Kidney (tissue), 22 donors: ENCODE measurements at regions of chr6 and their contacts with region 1.

Region 1: DNA sequence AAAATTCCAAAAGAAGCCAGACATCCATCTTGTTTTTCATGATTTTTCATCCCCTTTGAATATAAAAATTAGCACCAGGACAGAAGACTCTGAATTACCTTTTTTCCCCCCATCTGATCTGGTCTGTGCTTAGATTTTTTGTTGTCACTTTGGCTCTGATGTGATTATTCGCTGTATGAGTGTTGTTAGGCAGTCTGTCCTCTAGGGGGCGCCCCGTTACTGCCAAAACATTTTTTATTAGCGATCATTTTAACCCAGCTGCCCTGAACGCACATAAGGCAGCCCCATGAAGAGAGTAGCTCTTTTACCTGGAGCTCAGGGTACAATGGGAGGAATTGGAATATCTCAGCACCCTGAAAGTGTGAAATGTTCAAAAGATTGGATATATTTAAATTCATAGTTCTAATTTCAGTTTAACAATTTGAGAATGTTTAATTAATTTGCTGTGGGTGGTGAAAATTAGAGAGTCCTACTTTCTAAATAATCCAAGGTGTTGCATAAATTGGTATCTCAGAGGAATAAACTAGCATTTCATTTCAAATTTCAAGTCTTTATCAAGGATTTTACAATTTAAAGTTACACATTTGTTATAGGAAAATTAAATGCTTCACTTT is 60.8 kb downstream of the PRPH2 start:
- DNase-seq: peak; percentile 80 to 90 (median 82)
- H3K4me3 ChIP-seq: no peak overlapping the region
- H3K27ac ChIP-seq: no peak overlapping the region
- H3K4me1 ChIP-seq: no peaks in the 10 kb centered on the region
- H3K27me3 ChIP-seq: no peaks in the 10 kb centered on the region
- CTCF ChIP-seq: peak; percentile 95

Region 2: DNA sequence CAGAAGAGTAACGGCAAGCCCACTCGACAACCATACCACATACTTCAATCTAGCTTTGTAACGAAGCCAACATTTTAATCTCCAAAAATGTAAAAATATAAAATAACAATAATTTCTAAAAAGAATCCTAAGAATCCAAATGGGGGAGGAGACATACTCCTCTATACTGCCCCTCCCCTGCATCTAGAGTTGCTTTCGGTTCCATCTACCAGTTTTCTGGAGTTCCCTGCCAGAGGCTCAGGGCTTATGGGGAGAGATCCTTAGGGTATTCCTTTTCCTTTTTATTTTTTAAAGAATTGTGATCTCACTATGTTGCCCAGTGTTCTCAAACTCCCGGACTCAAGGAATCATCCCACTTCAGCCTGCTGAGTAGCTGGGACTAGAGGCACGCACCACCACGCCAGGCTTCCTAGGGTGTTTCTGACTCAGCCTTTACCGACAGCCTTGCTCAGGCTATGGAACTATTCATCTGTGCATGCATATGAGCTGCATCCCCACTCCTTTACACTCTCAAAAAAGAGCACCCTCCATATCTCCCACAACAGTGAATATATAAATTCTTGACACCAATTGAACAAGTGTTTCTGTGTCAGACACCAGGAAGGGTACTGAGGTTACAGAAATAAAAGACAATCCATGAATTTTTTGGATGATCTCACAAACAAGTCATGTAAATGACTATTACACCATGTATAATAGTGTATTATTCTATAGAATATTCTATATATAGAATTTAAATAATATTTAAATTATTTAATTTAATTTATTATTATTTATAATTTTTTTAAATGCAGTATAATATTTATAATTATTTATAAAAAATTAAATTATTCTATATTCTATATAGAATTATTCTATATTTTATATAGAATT is 138.5 kb before region 1 on chr6:
- intact Hi-C with region 1: no loop called
- DNase-seq: no peak
- H3K4me3 ChIP-seq: no peak overlapping the region
- H3K27ac ChIP-seq: no peak overlapping the region
- H3K4me1 ChIP-seq: no peaks in the 10 kb centered on the region
- H3K27me3 ChIP-seq: no peaks in the 10 kb centered on the region
- CTCF ChIP-seq: no peak

Region 3: GRCh38 chr6:42726485-42727086 is 64.9 kb after region 1 on chr6:
- intact Hi-C with region 1: loop called (anchors 10 kb)
- DNase-seq: peak; percentile 71 to 94 (median 80)
- H3K4me3 ChIP-seq: peak overlapping the region; percentile 68 to 96 (median 80)
- H3K27ac ChIP-seq: peak overlapping the region; percentile 44 to 71
- H3K4me1 ChIP-seq: peaks cover 0 to 2% (median 0%) of the 10 kb centered on the region in 3 donors
- H3K27me3 ChIP-seq: no peaks in the 10 kb centered on the region
- CTCF ChIP-seq: peak; percentile 93

Region 4: GRCh38 chr6:42879372-42880239 is 218.0 kb after region 1 on chr6 and contains the start of gene RPL7L1:
- intact Hi-C with region 1: loop called (anchors 5 kb)
- DNase-seq: peak; percentile 90 to 96 (median 91)
- H3K4me3 ChIP-seq: peak within 1 kb of the TSS; percentile 93 to 100 (median 100)
- H3K27ac ChIP-seq: peak within 1 kb of the TSS; percentile 85 to 93
- H3K4me1 ChIP-seq: peaks cover 0 to 5% (median 4%) of the 10 kb centered on the region in 3 donors
- H3K27me3 ChIP-seq: no peaks in the 10 kb centered on the region
- CTCF ChIP-seq: peak; percentile 2
- total RNA-seq, gene RPL7L1: 80.7 TPM